Calu3 (cell line): ENCODE measurements at regions of chr4 and their contacts with region 1.

Region 1: GRCh38 chr4:23232987-23233386 is 540.2 kb downstream of the GBA3 start:
- DNase-seq: no peak
- H3K4me3 Mint-ChIP-seq: no peak overlapping the region
- H3K27ac Mint-ChIP-seq: no peak overlapping the region
- H3K4me1 Mint-ChIP-seq: no peaks in the 10 kb centered on the region
- H3K27me3 Mint-ChIP-seq: no peaks in the 10 kb centered on the region
- CTCF ChIP-seq: no peak

Region 2: DNA sequence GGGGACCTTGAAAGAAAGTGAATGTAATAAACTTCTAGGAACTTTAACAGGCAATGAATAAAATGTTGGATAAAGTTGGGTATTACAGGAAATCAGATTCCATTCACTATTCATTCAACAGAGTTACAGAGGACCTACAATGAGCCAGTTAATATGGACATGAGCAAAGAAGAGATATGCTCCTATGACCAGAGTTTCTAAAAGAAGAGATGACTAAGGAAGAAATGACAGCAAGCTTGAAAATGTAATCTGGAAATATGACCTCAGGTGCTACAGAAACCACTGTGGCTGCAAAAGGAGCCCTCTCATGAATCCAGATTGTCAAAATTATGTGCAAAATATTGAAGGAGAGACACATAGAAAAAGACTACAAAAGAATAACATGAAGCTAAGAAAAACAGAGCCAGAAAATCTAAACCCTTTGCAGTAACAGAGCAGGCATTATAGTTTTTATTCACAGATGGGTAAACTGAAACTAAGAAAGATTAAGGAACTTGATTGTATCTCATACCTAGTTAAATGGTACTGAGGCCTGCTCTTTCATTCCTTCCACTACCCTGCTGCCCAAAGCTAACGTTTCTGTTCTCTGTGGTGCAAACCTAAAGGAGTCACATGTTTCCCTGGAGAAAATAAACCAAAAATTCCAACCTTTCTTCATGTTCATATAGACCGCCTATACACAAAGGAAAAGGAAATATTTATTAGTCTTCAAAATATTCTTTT is 162.0 kb before region 1 on chr4:
- CTCF ChIA-PET with region 1: no interaction called
- intact Hi-C with region 1: no loop called
- DNase-seq: no peak
- H3K4me3 Mint-ChIP-seq: no peak overlapping the region
- H3K27ac Mint-ChIP-seq: no peak overlapping the region
- H3K4me1 Mint-ChIP-seq: peaks cover 23% of the 10 kb centered on the region
- H3K27me3 Mint-ChIP-seq: no peaks in the 10 kb centered on the region
- CTCF ChIP-seq: no peak

Region 3: GRCh38 chr4:23602720-23603119 is 369.7 kb after region 1 on chr4:
- CTCF ChIA-PET with region 1: interaction called, 11 read pairs
- intact Hi-C with region 1: no loop called
- DNase-seq: no peak
- H3K4me3 Mint-ChIP-seq: no peak overlapping the region
- H3K27ac Mint-ChIP-seq: no peak overlapping the region
- H3K4me1 Mint-ChIP-seq: no peaks in the 10 kb centered on the region
- H3K27me3 Mint-ChIP-seq: no peaks in the 10 kb centered on the region
- CTCF ChIP-seq: no peak